Posterior vena cava (tissue), 2 donors: ENCODE measurements at regions of chr4 and their contacts with region 1.

Region 1: DNA sequence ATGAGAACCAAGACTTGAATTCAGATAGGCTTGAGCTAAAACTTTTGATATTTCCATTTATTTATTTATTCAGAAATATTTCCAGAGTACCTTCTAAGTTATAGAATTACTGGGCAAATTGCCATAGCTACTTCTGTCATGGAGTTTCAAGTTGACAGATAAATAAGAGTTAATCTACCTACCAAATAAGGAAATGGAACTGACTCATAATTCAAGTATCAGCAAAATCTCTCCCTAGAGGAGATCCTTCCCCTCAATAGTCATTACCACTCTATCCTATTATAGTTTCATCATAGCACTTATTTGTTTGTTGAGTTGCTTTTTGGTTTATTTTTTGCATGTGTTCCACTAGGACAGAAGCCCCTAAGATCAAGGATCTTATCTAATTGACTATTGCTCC is 48.8 kb upstream of the CCSER1 start:
- DNase-seq: no peak

Region 2: DNA sequence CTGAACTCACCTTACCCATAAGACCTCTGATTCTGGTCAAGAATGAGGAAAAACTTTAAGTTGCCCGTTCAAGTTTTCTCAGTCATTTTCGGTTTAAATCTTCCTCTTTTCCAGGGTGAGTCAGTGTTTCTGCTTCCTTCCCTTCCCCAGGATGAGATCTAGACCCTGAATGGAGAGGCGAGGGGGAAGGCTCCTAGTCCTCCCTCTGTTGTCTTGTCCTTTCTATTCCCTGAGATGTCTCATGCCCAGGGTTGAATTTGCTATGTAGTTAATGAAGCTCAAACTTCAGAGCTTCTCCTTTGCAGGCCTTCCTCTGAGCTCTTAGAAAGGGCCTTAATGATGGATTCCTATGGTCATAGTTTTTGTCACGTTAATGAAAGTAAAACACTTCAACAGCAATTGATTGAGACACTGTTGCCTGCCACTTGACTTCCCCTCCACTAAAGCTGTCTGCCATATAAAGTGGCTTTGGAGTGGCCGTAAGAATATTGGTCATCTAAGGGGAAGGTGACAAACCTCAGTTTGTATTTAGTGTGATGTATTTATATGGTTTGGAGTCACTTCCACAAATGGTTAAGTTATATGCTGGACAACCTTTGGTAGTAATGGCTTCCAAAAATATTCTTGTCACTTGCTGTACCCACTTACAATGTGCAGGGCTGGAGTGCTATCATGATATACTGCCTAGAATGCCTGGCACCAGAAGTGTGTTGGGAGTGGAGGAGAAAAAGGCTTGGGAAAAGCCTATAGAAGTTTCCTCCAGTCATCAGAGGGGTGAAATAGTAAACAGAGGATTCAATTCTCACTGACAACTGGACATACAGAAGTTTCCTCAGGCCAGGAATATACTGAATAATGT is 746.5 kb before region 1 on chr4:
- intact Hi-C with region 1: loop called in 1 of 2 experiments (anchors 5 kb)
- DNase-seq: no peak

Region 3: GRCh38 chr4:90425893-90426292 is 347.5 kb after region 1 on chr4:
- intact Hi-C with region 1: loop called in 1 of 2 experiments (anchors 5 kb)
- DNase-seq: no peak